ENCODE measurements at regions of chr1 and their contacts with region 1.

Region 1: GRCh38 chr1:9292361-9293240 is at the start of gene SPSB1:
- DNase-seq: peak; percentile 74 to 75
- ATAC-seq: peak; percentile 48 to 81 (median 70)
- H3K4me3 ChIP-seq: peak within 1 kb of the TSS; percentile 51 to 98 (median 75)
- H3K27ac ChIP-seq: peak within 1 kb of the TSS; percentile 73 to 95 (median 86)
- H3K4me1 ChIP-seq: peaks cover 6 to 54% (median 32%) of the 10 kb centered on the region in 9 donors
- H3K27me3 ChIP-seq: peaks cover 0 to 8% (median 0%) of the 10 kb centered on the region in 7 donors
- CTCF ChIP-seq: peak in 3 of 9 donors; percentile 7 to 15 (median 14)
- total RNA-seq, gene SPSB1: 5.5 to 16.5 (median 9.4) TPM

Region 2: GRCh38 chr1:9267352-9267686 is 25.3 kb before region 1 on chr1:
- intact Hi-C with region 1: no loop called
- DNase-seq: no peak
- ATAC-seq: peak in 1 of 8 donors; percentile 9
- H3K4me3 ChIP-seq: no peak overlapping the region
- H3K27ac ChIP-seq: peak overlapping the region in 1 of 10 donors; percentile 5
- H3K4me1 ChIP-seq: peaks cover 0 to 29% (median 15%) of the 10 kb centered on the region in 9 donors
- H3K27me3 ChIP-seq: no peaks in the 10 kb centered on the region
- CTCF ChIP-seq: peak in 2 of 9 donors; percentile 2 to 17

Region 3: DNA sequence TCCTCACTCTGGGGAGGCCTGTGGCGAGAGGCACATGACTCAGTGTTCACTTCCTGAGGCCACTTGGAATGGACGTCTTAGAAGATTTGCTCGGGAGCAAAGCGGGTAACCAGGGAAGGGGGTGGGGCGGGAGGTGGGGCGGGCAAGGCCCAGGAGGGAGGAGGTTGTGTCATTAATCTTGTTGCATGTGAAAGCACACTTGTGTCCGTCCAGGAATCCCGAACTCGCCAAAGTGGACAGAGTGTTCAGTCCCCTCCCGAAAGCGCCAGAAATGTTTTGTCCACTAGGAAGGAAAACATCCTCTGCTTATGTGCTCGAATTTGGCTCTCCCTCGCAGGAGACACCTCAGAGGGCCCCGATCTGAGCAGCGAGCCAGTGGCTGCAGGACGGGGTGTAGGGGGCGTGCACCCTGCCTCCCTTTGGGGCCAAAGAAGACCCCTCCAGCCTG is 84.3 kb after region 1 on chr1:
- intact Hi-C with region 1: loop called in 1 of 10 experiments (anchors 5 kb)
- DNase-seq: peak in 1 of 2 donors; percentile 41
- ATAC-seq: peak; percentile 48 to 82 (median 64)
- H3K4me3 ChIP-seq: no peak overlapping the region
- H3K27ac ChIP-seq: peak overlapping the region; percentile 18 to 83 (median 64)
- H3K4me1 ChIP-seq: peaks cover 8 to 41% (median 30%) of the 10 kb centered on the region in 9 donors
- H3K27me3 ChIP-seq: no peaks in the 10 kb centered on the region
- CTCF ChIP-seq: no peak

Region 4: DNA sequence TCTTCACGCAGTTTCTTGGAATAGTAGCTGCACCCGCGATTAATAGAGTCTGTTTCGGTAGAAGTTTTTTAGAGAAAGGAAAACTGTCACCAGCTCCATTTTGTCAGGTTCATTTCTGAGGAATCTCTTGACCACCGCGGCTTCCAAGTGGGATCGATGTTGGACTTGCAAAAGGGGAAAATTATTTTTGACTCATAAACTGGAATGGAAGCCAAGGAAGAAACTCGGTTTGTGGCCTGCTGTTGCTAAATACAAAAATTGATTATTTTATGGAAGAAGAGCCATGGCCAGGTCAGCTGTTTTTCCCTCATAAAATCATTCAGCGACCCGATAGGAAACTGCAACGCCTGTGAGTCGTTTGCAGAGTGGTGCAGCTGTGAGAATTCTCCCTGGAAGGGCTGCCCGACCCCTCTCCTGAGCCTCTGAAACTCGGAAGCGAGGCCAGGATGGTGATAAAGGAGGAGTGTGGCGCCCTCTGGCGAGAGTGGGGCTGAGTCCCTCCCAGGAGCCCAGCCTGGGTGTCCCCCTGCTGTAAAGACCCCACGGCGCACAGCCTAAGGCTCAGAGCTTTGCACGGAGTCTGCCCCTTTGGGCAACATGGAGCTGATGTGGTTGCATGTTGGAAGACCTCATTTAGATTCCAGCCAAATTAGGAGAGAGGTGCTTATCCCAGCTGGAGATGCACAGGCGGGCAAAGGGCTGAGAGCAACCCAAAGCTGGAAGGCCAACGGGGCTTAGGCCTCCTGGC is 163.1 kb after region 1 on chr1:
- intact Hi-C with region 1: loop called in 9 of 10 experiments (anchors 2 to 5 kb)
- DNase-seq: peak; percentile 60 to 78
- ATAC-seq: peak; percentile 54 to 83 (median 78)
- H3K4me3 ChIP-seq: no peak overlapping the region
- H3K27ac ChIP-seq: no peak overlapping the region
- H3K4me1 ChIP-seq: peaks cover 0 to 12% (median 0%) of the 10 kb centered on the region in 9 donors
- H3K27me3 ChIP-seq: no peaks in the 10 kb centered on the region
- CTCF ChIP-seq: peak; percentile 54 to 84 (median 77)

Region 5: GRCh38 chr1:9494929-9495758 is 202.5 kb after region 1 on chr1:
- intact Hi-C with region 1: loop called in 8 of 10 experiments (anchors 1 to 5 kb)
- DNase-seq: peak; percentile 19 to 63
- ATAC-seq: peak; percentile 67 to 81 (median 72)
- H3K4me3 ChIP-seq: peak overlapping the region in 7 of 10 donors; percentile 31 to 52 (median 43)
- H3K27ac ChIP-seq: no peak overlapping the region
- H3K4me1 ChIP-seq: peaks cover 0 to 15% (median 8%) of the 10 kb centered on the region in 9 donors
- H3K27me3 ChIP-seq: peaks cover 0 to 12% (median 0%) of the 10 kb centered on the region in 7 donors
- CTCF ChIP-seq: peak; percentile 95 to 99 (median 98)

Measured in heart right ventricle (tissue), 16 donors.